AG04449 (cell line): ENCODE measurements at regions of chr4 and their contacts with region 1.

Region 1: GRCh38 chr4:157045507-157046127 is 30.3 kb upstream of the GLRB start:
- DNase-seq: peak; percentile 17
- H3K4me3 ChIP-seq: no peak overlapping the region
- CTCF ChIP-seq: peak; percentile 87

Region 2: GRCh38 chr4:156475322-156475721 is 570.3 kb before region 1 on chr4:
- CTCF ChIA-PET with region 1: interaction called, 50 read pairs
- POLR2A ChIA-PET with region 1: no interaction called
- DNase-seq: peak; percentile 28
- H3K4me3 ChIP-seq: no peak overlapping the region
- CTCF ChIP-seq: peak; percentile 46

Region 3: GRCh38 chr4:156977435-156978160 is 68.0 kb before region 1 on chr4:
- CTCF ChIA-PET with region 1: interaction called, 32 read pairs
- POLR2A ChIA-PET with region 1: no interaction called
- DNase-seq: peak; percentile 68
- H3K4me3 ChIP-seq: no peak overlapping the region
- CTCF ChIP-seq: no peak

Region 4: GRCh38 chr4:157014621-157015591 is 30.7 kb before region 1 on chr4:
- CTCF ChIA-PET with region 1: interaction called, 12 read pairs
- POLR2A ChIA-PET with region 1: no interaction called
- DNase-seq: peak; percentile 82
- H3K4me3 ChIP-seq: no peak overlapping the region
- CTCF ChIP-seq: no peak

Region 5: GRCh38 chr4:157035471-157035870 is 10.1 kb before region 1 on chr4:
- CTCF ChIA-PET with region 1: interaction called, 31 read pairs
- POLR2A ChIA-PET with region 1: no interaction called
- DNase-seq: no peak
- H3K4me3 ChIP-seq: no peak overlapping the region
- CTCF ChIP-seq: no peak